ENCODE measurements at regions of chr4 and their contacts with region 1.

Region 1: DNA sequence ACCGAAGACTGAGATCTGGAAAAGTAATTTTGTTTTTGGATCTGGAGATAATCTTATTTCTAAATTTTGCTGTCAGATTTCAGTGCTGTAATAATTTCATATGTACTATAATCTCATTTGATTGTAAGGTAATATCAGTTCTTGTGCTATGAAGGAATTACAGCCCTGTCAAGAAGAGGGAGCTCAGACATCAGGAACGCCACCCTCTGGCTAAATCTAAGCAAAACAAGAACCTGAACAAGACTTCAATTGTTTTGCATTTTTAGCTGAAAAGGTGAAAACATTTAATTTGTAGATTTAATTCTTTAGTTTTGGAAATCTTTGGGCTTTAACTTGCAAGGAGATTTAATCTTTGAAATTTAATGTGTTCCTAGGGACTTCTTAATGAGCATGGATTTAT is 525.4 kb upstream of the HS3ST1 start:
- DNase-seq: peak in 5 of 7 donors; percentile 24 to 55 (median 44)
- H3K4me3 ChIP-seq: no peak overlapping the region
- H3K27ac ChIP-seq: no peak overlapping the region
- H3K4me1 ChIP-seq: no peaks in the 10 kb centered on the region
- H3K27me3 ChIP-seq: no peaks in the 10 kb centered on the region
- CTCF ChIP-seq: peak; percentile 42 to 61 (median 59)
- POLR2A ChIP-seq: no peak

Region 2: GRCh38 chr4:11765849-11766453 is 188.1 kb before region 1 on chr4:
- intact Hi-C with region 1: loop called in 1 of 2 experiments (anchors 10 kb)
- DNase-seq: peak in 6 of 7 donors; percentile 25 to 57 (median 42)
- H3K4me3 ChIP-seq: no peak overlapping the region
- H3K27ac ChIP-seq: no peak overlapping the region
- H3K4me1 ChIP-seq: peaks cover 5 to 8% of the 10 kb centered on the region in 2 donors
- H3K27me3 ChIP-seq: no peaks in the 10 kb centered on the region
- CTCF ChIP-seq: peak; percentile 48 to 81 (median 66)
- POLR2A ChIP-seq: no peak

Region 3: DNA sequence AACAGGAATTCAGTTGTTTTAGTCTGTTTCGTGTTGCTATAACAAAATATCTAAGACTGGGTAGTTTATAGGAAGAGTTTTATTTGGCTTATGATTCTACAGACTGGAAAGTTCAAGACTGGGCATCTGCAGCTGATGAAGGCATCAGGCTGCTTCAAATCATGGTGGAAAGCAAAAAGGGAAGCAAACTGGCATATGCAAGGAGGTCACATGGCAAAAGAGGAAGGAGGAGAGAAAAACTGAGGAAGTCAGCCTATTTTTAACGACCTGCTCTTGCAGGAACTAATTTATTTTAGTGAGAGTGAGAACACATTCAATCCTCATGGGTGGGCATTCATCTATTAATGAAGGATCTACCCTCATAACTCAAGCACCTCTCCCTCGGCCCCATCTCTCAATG is 162.3 kb before region 1 on chr4:
- intact Hi-C with region 1: no loop called
- DNase-seq: no peak
- H3K4me3 ChIP-seq: no peak overlapping the region
- H3K27ac ChIP-seq: no peak overlapping the region
- H3K4me1 ChIP-seq: no peaks in the 10 kb centered on the region
- H3K27me3 ChIP-seq: no peaks in the 10 kb centered on the region
- CTCF ChIP-seq: no peak
- POLR2A ChIP-seq: no peak

Region 4: GRCh38 chr4:12231098-12231497 is 277.0 kb after region 1 on chr4:
- intact Hi-C with region 1: no loop called
- DNase-seq: no peak
- H3K4me3 ChIP-seq: no peak overlapping the region
- H3K27ac ChIP-seq: no peak overlapping the region
- H3K4me1 ChIP-seq: no peaks in the 10 kb centered on the region
- H3K27me3 ChIP-seq: no peaks in the 10 kb centered on the region
- CTCF ChIP-seq: no peak
- POLR2A ChIP-seq: no peak